OCI-LY7 (cell line): ENCODE measurements at regions of chr5 and their contacts with region 1.

Region 1: DNA sequence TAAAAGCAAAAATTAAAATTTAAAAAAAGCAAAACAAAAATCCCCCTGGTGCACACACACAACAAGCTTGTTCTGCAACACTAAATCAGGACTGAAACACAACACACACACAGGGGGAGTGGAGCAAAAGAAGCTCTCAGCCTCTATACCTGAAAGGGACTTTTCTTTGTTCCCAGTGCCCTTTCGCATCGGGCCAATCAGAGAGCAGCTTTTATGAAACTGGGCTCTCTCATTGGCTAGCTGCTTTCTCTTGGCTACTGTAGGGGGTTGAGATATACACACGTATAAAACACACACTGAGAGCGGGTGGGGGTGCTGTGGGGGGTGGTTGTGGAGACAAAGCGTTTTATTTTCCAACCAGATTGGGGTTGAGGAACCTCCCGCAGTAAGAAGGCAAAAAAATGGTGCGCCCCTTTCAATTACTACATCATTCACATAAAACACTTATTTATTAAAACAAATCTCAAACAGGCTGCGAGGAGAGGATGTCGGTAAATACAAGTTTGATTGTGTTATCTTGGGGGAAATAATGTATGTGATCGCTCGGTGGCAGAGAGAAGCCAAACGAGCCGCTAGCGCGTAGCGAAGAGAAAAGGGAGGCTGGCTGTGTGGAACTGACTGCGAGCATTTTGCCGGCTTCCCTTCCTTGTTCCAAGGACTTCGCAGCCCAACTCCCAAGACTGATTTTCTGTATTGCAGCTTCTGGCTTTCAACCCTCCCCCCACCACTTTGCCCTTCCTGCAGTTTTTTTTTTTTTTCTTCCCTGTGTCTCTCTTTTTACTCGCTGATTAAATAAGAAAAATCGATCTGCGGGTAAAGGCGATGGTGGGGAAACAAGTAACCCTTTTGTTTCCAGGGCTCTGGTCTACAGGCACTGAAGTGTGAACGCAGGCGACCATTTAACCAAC is 2.5 kb upstream of the ZNF608 start:
- DNase-seq: peak; percentile 96
- H3K4me3 ChIP-seq: peak overlapping the region; percentile 85
- H3K27ac ChIP-seq: peak overlapping the region; percentile 97
- H3K4me1 ChIP-seq: peaks cover 21% of the 10 kb centered on the region
- CTCF ChIP-seq: peak; percentile 33; the same call in 1 of the 2 replicates

Region 2: DNA sequence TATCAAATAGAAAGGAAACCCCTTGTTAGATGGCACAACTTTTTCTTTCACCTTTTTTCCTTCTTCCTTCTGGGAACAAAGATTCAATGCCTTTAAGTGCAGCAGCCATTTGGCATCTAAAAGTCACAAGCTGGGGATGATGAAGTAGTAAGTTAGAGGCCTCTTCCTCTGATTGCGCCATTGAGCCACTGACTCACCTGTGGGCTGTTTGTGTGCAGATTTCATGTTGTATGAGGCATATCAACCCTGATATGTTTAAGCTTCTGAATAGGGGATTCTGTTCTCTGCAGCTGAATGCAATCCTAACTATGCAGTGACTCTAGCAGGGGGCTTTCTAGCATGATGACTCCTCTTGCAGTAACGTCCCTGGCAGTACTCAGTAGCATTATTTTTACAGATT is 637.1 kb before region 1 on chr5:
- CTCF ChIA-PET with region 1: no interaction called
- POLR2A ChIA-PET with region 1: no interaction called
- intact Hi-C with region 1: no loop called
- DNase-seq: no peak
- H3K4me3 ChIP-seq: no peak overlapping the region
- H3K27ac ChIP-seq: no peak overlapping the region
- H3K4me1 ChIP-seq: no peaks in the 10 kb centered on the region
- CTCF ChIP-seq: no peak

Region 3: GRCh38 chr5:124524552-124525232 is 224.2 kb before region 1 on chr5:
- CTCF ChIA-PET with region 1: interaction called, 3 read pairs
- POLR2A ChIA-PET with region 1: interaction called, 4 read pairs
- intact Hi-C with region 1: loop called (anchors 2 kb)
- DNase-seq: peak; percentile 91
- H3K4me3 ChIP-seq: peak overlapping the region; percentile 3
- H3K27ac ChIP-seq: peak overlapping the region; percentile 56
- H3K4me1 ChIP-seq: peaks cover 25% of the 10 kb centered on the region
- CTCF ChIP-seq: peak; percentile 72

Region 4: GRCh38 chr5:124718380-124718789 is 30.6 kb before region 1 on chr5:
- CTCF ChIA-PET with region 1: no interaction called
- POLR2A ChIA-PET with region 1: interaction called, 15 read pairs
- intact Hi-C with region 1: no loop called
- DNase-seq: no peak
- H3K4me3 ChIP-seq: peak overlapping the region; percentile 61
- H3K27ac ChIP-seq: peak overlapping the region; percentile 71
- H3K4me1 ChIP-seq: peaks cover 88% of the 10 kb centered on the region
- CTCF ChIP-seq: no peak

Region 5: DNA sequence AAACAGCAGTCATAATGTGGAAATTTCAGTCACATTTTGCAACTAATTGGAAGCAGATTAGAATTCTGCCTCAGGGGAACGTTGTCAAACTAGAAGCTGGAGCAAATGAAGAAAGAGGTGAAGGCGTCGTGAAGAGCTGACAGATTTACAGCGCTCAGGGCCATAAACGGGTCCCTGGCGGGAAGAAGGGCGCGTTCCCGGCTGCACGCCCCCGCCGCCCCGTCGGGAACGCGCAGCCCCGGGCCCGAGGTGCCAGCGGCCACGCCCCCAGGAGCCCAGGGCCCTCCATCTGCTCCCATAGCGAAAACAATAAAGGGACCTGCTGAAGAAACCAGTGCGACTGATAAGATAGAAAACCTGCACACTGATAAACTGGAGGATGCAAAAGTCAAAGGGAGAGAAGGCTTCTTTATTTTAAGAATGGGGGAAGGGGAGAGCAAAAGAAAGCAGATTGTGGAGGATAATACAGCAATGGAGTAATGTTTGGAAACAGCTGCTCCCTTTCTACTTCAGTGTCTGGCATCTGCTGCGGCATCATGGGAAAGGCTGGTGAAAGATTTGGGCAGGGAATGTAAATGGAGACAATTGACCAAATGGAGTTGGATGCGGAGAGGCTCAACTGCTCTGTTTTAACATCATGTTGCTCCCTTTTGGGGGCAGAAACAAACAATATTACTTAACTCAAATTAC is 13.6 kb before region 1 on chr5:
- CTCF ChIA-PET with region 1: interaction called, 3 read pairs
- POLR2A ChIA-PET with region 1: interaction called, 61 read pairs
- intact Hi-C with region 1: no loop called
- DNase-seq: peak; percentile 73
- H3K4me3 ChIP-seq: peak overlapping the region; percentile 85
- H3K27ac ChIP-seq: peak overlapping the region; percentile 97
- H3K4me1 ChIP-seq: peaks cover 96% of the 10 kb centered on the region
- CTCF ChIP-seq: no peak

Region 6: DNA sequence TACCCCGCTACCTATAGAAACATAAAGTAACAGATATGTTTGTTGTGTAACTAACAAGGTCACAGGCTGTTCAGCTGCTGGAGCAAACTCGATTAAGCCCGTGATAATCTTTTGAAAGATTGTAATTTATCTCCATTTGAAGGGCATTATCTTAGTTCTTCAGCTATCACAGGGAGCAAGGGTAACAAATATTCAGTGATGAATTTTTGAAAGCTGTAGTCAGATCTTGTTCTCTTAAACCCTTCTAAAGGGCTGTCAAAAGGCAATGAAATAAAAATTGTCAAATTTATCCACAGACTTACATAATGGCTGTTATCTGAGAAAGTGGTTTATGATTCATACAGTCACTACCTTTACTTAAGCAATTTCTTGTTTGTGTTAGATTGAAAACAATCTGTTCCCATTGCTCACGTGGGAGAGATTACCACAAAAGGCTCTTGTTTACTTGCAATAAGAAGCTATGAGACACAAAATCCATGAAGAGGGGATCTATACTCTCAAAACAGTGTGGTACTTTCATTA is 75.8 kb after region 1 on chr5:
- CTCF ChIA-PET with region 1: interaction called, 3 read pairs
- POLR2A ChIA-PET with region 1: interaction called, 9 read pairs
- intact Hi-C with region 1: loop called (anchors 5 kb)
- DNase-seq: no peak
- H3K4me3 ChIP-seq: peak overlapping the region; percentile 46
- H3K27ac ChIP-seq: peak overlapping the region; percentile 80
- H3K4me1 ChIP-seq: peaks cover 33% of the 10 kb centered on the region
- CTCF ChIP-seq: no peak

Region 7: GRCh38 chr5:124980163-124980941 is 231.4 kb after region 1 on chr5:
- CTCF ChIA-PET with region 1: no interaction called
- POLR2A ChIA-PET with region 1: interaction called, 4 read pairs
- intact Hi-C with region 1: loop called (anchors 2 kb)
- DNase-seq: peak; percentile 91
- H3K4me3 ChIP-seq: peak overlapping the region; percentile 56
- H3K27ac ChIP-seq: peak overlapping the region; percentile 98
- H3K4me1 ChIP-seq: peaks cover 44% of the 10 kb centered on the region
- CTCF ChIP-seq: no peak